ENCODE measurements at regions of chr11 and their contacts with region 1.

Region 1: GRCh38 chr11:82900277-82901164 is at the start of gene PRCP:
- DNase-seq: peak; percentile 96
- ATAC-seq: peak; percentile 88
- H3K4me3 ChIP-seq: peak within 1 kb of the TSS; percentile 83
- H3K27ac ChIP-seq: peak within 1 kb of the TSS; percentile 9
- H3K4me1 ChIP-seq: peaks cover 22% of the 10 kb centered on the region
- H3K27me3 ChIP-seq: no peaks in the 10 kb centered on the region
- CTCF ChIP-seq: no peak
- total RNA-seq, gene PRCP: 36.6 and 51.5 TPM in 2 replicates

Region 2: GRCh38 chr11:82738091-82738490 is 162.4 kb before region 1 on chr11:
- CTCF ChIA-PET with region 1: no interaction called
- POLR2A ChIA-PET with region 1: no interaction called
- intact Hi-C with region 1: no loop called
- DNase-seq: no peak
- ATAC-seq: no peak
- H3K4me3 ChIP-seq: no peak overlapping the region
- H3K27ac ChIP-seq: no peak overlapping the region
- H3K4me1 ChIP-seq: no peaks in the 10 kb centered on the region
- H3K27me3 ChIP-seq: peaks cover 69% of the 10 kb centered on the region
- CTCF ChIP-seq: no peak

Region 3: GRCh38 chr11:82858556-82859091 is 41.9 kb before region 1 on chr11:
- CTCF ChIA-PET with region 1: no interaction called
- POLR2A ChIA-PET with region 1: interaction called, 5 read pairs
- intact Hi-C with region 1: loop called (anchors 2 kb)
- DNase-seq: peak; percentile 98
- ATAC-seq: peak; percentile 80
- H3K4me3 ChIP-seq: peak overlapping the region; percentile 55
- H3K27ac ChIP-seq: peak overlapping the region; percentile 74
- H3K4me1 ChIP-seq: peaks cover 46% of the 10 kb centered on the region
- H3K27me3 ChIP-seq: no peaks in the 10 kb centered on the region
- CTCF ChIP-seq: no peak

Region 4: DNA sequence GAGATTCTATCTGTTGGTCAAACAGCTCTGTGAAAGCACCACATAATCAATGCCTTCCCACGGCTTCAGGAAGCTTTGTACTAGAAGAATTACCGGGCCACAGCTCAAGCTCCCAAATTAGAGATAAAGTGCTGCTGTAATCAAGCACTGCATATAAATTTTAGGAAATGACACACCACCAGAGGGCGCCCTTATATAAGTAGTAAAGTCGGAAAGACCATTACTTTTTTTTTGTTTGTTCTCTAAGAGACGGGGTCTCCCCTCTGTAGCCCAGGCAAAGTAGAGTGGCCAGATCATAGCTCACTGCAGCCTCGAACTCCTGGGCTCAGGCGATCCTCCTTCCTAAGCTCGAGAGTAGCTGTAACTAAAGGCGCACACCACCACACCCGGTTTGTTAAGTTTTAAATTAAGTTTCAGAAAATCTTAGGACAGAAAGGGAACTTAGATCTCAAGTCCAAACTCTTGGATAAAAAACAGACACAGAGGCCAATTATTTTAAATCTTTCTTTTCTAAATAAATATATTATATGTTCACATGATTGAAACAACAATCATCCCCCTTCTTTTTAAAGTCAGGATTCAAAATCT is 32.9 kb before region 1 on chr11:
- CTCF ChIA-PET with region 1: interaction called, 20 read pairs
- POLR2A ChIA-PET with region 1: interaction called, 5 read pairs
- intact Hi-C with region 1: loop called (anchors 1 kb)
- DNase-seq: peak; percentile 92
- ATAC-seq: peak; percentile 31
- H3K4me3 ChIP-seq: peak overlapping the region; percentile 40; the same call in 1 of the 2 replicates
- H3K27ac ChIP-seq: no peak overlapping the region
- H3K4me1 ChIP-seq: peaks cover 11% of the 10 kb centered on the region
- H3K27me3 ChIP-seq: no peaks in the 10 kb centered on the region
- CTCF ChIP-seq: peak; percentile 95

Region 5: GRCh38 chr11:83051760-83052671 is 151.5 kb after region 1 on chr11:
- CTCF ChIA-PET with region 1: no interaction called
- POLR2A ChIA-PET with region 1: no interaction called
- intact Hi-C with region 1: loop called (anchors 2 kb)
- DNase-seq: peak; percentile 97
- ATAC-seq: peak; percentile 81
- H3K4me3 ChIP-seq: peak overlapping the region; percentile 34
- H3K27ac ChIP-seq: peak overlapping the region; percentile 91
- H3K4me1 ChIP-seq: peaks cover 71% of the 10 kb centered on the region
- H3K27me3 ChIP-seq: no peaks in the 10 kb centered on the region
- CTCF ChIP-seq: no peak

Region 6: DNA sequence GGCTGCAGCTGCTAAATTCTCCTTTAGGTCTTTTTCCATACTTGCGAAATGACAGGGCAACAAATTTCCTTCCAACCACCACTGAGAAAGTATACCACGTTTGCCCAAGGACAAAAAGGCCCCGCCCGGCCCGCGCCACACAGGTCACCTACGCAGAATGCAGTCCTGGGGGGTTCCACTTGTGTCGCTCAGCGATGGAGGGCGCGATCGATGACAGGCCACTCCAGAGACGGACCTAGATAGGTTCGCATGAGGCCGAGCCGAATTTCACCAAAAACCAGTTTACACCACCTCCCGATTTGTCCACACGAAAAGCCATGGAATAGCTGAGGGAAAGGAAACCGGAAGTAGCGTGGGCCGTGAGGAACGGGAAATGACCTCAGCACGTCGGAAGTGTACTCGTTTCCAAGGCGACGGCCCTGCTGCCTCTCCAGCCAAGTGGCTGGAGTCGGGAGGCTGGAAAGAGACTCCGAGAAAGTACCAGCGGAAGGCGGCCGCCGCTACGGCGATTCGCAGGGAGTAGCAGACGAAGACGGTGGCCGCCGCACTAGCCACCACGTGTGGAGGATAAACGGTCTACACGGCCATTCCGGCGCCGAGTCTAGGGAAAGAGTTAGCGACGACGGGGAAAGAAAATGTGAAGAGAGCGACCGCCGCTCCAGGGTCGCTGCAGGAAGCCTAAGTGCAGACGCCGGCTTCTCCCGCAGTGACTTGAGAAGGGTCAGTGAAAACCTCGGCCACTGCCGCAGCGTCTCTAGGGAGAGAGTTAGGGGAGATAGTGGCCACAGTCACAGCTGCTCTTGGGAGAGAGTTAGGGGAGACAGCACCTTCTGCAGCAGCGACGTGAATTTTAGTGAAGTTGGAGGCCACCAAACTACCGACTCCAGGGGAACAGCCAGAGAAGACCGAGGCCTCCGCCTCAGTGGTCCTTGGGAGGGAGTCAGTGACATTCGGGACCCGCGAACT is 293.1 kb after region 1 on chr11 and contains the start of gene ANKRD42:
- CTCF ChIA-PET with region 1: no interaction called
- POLR2A ChIA-PET with region 1: no interaction called
- intact Hi-C with region 1: loop called (anchors 2 kb)
- DNase-seq: peak; percentile 98
- ATAC-seq: peak; percentile 84
- H3K4me3 ChIP-seq: peak within 1 kb of the TSS; percentile 96
- H3K27ac ChIP-seq: peak within 1 kb of the TSS; percentile 58
- H3K4me1 ChIP-seq: peaks cover 29% of the 10 kb centered on the region
- H3K27me3 ChIP-seq: no peaks in the 10 kb centered on the region
- CTCF ChIP-seq: no peak
- total RNA-seq, gene ANKRD42: 6.6 and 11.2 TPM in 2 replicates

Region 7: DNA sequence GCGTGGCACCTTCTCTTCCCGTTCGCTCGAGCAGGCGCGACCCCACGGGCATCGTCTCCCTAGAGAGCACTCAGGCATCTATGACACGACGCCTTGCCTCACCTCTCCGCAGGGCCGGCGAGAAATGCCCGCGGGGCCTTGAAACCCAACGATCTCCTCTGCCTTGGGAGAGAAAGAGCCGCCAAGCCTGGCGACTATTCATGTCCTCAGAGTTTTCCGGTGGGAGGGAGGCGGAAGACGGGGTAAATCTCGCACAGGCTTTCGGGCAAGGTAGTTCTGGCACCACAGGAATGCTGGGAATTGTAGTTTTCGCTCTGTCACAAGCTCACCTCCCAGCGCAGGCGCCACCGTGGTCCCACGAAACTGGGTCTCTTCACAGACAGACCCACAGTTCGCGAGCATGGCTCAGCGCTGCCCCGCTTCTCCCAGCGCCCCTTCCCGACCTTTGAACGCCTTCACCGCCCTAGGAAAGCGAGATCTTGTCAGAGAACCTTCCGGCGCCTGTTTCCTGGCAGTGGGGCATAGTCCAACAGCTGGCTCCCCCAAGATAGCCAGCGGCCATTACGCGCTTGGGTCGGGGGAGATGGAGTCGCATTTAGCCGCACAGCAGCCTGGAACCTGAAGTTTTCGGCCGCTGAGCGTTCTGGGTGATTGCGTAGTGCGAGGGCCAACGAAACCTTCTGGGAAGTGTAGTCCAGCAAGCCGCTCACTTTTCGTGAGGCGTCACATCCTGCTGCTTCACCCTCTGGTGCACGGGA is 385.4 kb after region 1 on chr11 and contains the start of gene CCDC90B:
- CTCF ChIA-PET with region 1: interaction called, 4 read pairs
- POLR2A ChIA-PET with region 1: interaction called, 3 read pairs
- intact Hi-C with region 1: loop called (anchors 2 kb)
- DNase-seq: peak; percentile 99
- ATAC-seq: peak; percentile 85
- H3K4me3 ChIP-seq: peak within 1 kb of the TSS; percentile 83
- H3K27ac ChIP-seq: peak within 1 kb of the TSS; percentile 82
- H3K4me1 ChIP-seq: peaks cover 33% of the 10 kb centered on the region
- H3K27me3 ChIP-seq: no peaks in the 10 kb centered on the region
- CTCF ChIP-seq: no peak
- total RNA-seq, gene CCDC90B: 59.4 and 70.8 TPM in 2 replicates

Measured in PC-3 (cell line).